Esophagus muscularis mucosa (tissue), 4 donors: ENCODE measurements at regions of chr7 and their contacts with region 1.

Region 1: DNA sequence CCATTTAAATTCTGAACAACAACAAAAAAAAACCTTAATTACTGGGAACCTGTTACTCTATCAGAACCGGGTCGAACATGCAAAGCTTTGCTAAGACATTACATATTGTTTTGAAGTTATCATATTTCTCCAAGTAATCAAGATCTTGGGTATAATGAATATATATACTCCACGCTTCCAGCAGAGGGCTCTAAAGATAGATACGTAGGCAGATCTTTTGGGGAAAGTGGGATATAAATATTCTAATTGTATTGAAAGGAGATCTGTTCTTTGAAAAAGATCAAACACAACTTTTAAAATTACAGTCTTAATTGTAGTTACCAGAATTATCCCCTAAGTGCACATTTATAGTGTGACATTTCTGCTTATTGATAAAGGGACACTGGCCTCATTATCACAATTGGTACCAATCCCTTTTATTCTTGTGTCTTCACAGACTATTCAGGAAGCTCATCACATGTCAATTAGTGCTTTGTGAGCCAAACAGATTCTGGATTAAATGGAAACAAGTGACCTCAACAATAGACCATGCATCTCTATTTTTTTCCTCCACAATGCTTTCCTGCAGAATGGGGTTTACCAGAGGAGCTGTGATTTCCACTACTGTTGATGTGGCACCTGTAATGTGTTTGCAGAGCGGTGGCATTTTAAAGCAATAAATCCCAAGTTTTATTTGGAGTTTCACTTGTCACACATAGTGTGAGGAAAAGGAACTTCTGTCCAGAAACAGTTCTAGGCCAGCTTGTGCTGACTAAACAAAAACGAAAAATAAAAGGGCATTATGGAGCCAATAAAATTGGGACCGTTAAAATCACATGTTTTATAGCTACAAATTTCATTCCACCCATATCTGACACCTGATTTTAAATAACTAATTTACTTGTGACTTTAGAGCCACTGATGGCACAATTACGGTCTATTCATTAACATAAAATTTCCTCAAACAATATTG is 122.4 kb downstream of the CTTNBP2 start:
- DNase-seq: no peak
- H3K4me3 ChIP-seq: no peak overlapping the region
- H3K27ac ChIP-seq: no peak overlapping the region
- H3K4me1 ChIP-seq: no peaks in the 10 kb centered on the region
- H3K27me3 ChIP-seq: no peaks in the 10 kb centered on the region
- CTCF ChIP-seq: peak; percentile 53 to 65 (median 64)
- EP300 ChIP-seq: no peak
- POLR2A ChIP-seq: no peak

Region 2: DNA sequence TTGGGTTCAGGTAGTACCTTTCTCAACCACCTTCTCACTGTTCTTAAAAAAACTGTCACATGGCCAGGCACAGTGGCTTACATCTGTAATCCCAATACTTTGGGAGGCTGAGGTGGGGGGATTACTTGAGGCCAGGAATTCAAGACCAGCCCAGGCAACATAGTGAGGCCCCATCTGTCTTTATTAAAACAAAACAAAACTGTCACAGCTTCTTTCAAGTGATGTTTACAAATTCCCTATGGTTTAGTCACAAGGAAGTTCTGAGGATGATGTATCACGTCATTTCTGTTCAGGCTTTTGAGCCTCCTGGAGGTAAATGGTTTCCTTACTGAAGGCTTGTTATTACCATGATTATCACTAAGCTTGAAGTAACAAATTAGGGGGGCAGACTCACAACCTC is 84.9 kb before region 1 on chr7:
- intact Hi-C with region 1: no loop called
- DNase-seq: no peak
- H3K4me3 ChIP-seq: no peak overlapping the region
- H3K27ac ChIP-seq: no peak overlapping the region
- H3K4me1 ChIP-seq: no peaks in the 10 kb centered on the region
- H3K27me3 ChIP-seq: no peaks in the 10 kb centered on the region
- CTCF ChIP-seq: no peak
- EP300 ChIP-seq: no peak
- POLR2A ChIP-seq: no peak

Region 3: GRCh38 chr7:117873310-117874190 is 122.7 kb after region 1 on chr7 and contains the start of gene CTTNBP2:
- intact Hi-C with region 1: loop called (anchors 5 kb)
- DNase-seq: no peak
- H3K4me3 ChIP-seq: peak within 1 kb of the TSS; percentile 73 to 98 (median 91)
- H3K27ac ChIP-seq: peak within 1 kb of the TSS; percentile 86 to 89 (median 86)
- H3K4me1 ChIP-seq: peaks cover 7 to 49% (median 39%) of the 10 kb centered on the region in 4 donors
- H3K27me3 ChIP-seq: no peaks in the 10 kb centered on the region
- CTCF ChIP-seq: peak in 1 of 3 experiments; percentile 22
- EP300 ChIP-seq: no peak
- POLR2A ChIP-seq: no peak
- total RNA-seq, gene CTTNBP2: 11.6 to 23.7 (median 13.7) TPM

Region 4: GRCh38 chr7:118104812-118105441 is 354.0 kb after region 1 on chr7:
- intact Hi-C with region 1: loop called (anchors 10 kb)
- DNase-seq: no peak
- H3K4me3 ChIP-seq: no peak overlapping the region
- H3K27ac ChIP-seq: no peak overlapping the region
- H3K4me1 ChIP-seq: no peaks in the 10 kb centered on the region
- H3K27me3 ChIP-seq: no peaks in the 10 kb centered on the region
- CTCF ChIP-seq: peak; percentile 35 to 52 (median 37)
- EP300 ChIP-seq: no peak
- POLR2A ChIP-seq: no peak

Region 5: GRCh38 chr7:118195837-118196474 is 445.1 kb after region 1 on chr7:
- intact Hi-C with region 1: loop called (anchors 5 kb)
- DNase-seq: no peak
- H3K4me3 ChIP-seq: no peak overlapping the region
- H3K27ac ChIP-seq: peak overlapping the region in 1 of 4 donors; percentile 15
- H3K4me1 ChIP-seq: no peaks in the 10 kb centered on the region
- H3K27me3 ChIP-seq: no peaks in the 10 kb centered on the region
- CTCF ChIP-seq: peak; percentile 58 to 76 (median 62)
- EP300 ChIP-seq: no peak
- POLR2A ChIP-seq: no peak